B cell (primary cell): ENCODE measurements at regions of chr20 and their contacts with region 1.

Region 1: DNA sequence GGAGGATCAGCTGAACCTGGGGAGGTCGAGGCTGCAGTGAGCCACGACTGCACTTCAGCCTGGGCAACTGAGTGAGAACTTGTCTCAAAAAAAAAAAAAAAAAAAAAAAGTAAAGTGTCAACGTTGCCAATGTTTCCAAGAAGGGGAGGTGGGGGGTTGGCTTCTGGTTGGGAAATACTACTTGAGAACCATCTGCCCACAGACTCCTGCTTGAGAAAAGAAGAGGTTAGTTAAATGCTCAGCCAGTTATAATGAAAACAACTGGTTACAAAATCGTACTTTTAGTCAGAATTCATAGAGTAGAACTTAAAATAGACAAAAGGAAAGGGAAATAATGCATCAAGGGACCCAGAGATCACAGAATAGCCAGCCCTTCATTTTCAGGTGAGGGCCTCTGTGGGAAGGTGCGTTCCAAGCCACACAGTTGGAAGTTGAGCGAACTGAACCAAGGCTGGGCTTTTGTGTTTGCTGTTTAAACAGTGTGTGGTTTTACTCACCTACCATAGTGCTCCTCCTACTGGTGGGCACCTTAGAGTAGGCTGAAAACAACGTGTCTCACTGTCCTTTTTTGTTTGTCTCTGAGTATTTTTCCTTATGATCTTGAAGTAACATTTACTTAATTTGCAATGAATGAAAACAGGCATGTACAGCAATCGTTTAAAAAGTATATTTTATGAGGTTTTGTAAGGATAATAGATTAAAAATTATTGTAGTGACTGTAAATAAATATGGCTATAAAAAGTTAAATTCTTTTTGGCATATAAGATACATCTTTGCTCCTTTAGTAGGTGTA is 200.7 kb downstream of the BCAS1 start:
- DNase-seq: peak; percentile 82
- ATAC-seq: peak; percentile 76
- H3K4me3 ChIP-seq: peak overlapping the region in 2 of 5 experiments; percentile 35 to 54
- H3K4me3 Mint-ChIP-seq: peak overlapping the region; percentile 40
- H3K27ac ChIP-seq: peak overlapping the region; percentile 65 to 79
- H3K27ac Mint-ChIP-seq: peak overlapping the region; percentile 72
- H3K4me1 ChIP-seq: peaks cover 69% of the 10 kb centered on the region in 2 donors
- H3K4me1 Mint-ChIP-seq: peaks cover 64% of the 10 kb centered on the region
- H3K27me3 ChIP-seq: no peaks in the 10 kb centered on the region
- H3K27me3 Mint-ChIP-seq: no peaks in the 10 kb centered on the region
- CTCF ChIP-seq: peak; percentile 89

Region 2: DNA sequence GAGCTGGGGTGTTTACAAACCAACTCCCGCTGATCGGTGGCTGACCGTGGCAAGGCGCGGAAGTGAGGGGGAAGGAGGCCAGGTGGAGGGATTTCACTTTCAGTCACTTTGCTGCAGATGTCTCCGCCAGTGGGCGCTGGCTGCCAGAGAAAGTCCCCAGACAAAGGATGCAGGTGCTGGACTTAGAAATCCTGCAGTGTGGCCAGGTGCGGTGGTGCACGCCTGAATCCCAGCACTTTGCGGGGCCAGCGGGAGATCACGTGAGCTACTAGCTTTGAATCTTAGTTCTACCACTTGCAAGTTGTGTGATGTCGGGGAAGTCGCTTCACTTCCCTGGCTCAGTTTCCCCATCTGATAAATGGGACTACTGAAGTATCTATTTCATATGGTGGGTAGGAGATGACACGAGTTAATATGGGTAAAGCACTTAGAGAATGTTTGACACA is 456.5 kb before region 1 on chr20:
- CTCF ChIA-PET with region 1: no interaction called
- POLR2A ChIA-PET with region 1: no interaction called
- intact Hi-C with region 1: loop called (anchors 2 kb)
- DNase-seq: peak; percentile 72
- ATAC-seq: peak; percentile 56
- H3K4me3 ChIP-seq: peak overlapping the region in 1 of 5 experiments; percentile 10
- H3K4me3 Mint-ChIP-seq: peak overlapping the region; percentile 56
- H3K27ac ChIP-seq: no peak overlapping the region
- H3K27ac Mint-ChIP-seq: peak overlapping the region; percentile 0
- H3K4me1 ChIP-seq: peaks cover 0 to 8% of the 10 kb centered on the region in 2 donors
- H3K4me1 Mint-ChIP-seq: peaks cover 5% of the 10 kb centered on the region
- H3K27me3 ChIP-seq: peaks cover 0 to 4% (median 0%) of the 10 kb centered on the region in 4 experiments
- H3K27me3 Mint-ChIP-seq: no peaks in the 10 kb centered on the region
- CTCF ChIP-seq: peak; percentile 62

Region 3: DNA sequence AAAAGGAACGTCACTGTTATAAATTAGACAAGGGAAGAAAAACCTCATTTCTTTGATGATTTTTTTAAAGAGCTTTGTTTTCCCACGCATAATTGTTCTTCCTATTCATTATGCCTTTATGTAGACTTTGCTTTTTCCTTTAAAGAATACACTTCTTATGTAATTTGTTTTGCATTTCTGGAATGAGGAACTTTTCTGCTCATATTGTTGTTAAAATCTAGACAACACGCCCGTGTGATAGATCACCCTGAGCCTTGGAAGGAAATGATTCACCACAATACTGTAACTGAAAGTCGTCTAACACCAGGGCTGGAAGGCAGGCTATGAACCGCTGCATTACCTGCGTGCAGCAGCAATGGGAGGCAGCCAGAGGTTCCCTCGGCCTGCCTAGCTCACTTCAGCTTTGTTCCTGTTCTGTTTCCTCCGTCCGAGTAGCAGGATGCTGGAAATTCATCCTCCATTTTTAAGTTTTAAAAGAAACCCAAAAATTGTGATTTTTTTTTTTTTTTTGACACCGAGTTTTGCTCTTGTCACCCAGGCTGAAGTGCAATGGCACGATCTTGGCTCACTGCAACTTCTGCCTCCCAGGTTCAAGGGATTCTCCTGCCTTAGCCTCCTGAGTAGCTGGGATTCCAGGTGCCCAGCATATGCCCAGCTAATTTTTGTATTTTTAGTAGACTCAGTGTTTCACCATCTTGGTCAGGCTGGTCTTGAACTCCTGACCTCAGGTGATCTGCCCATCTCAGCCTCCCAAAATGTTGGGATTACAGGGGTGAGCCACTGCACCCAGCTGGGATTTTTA is 226.4 kb before region 1 on chr20:
- CTCF ChIA-PET with region 1: interaction called, 4 read pairs
- POLR2A ChIA-PET with region 1: no interaction called
- intact Hi-C with region 1: loop called (anchors 5 kb)
- DNase-seq: peak; percentile 74
- ATAC-seq: peak; percentile 90
- H3K4me3 ChIP-seq: peak overlapping the region in 4 of 5 experiments; percentile 0 to 43 (median 24)
- H3K4me3 Mint-ChIP-seq: peak overlapping the region; percentile 82
- H3K27ac ChIP-seq: peak overlapping the region; percentile 64 to 85
- H3K27ac Mint-ChIP-seq: peak overlapping the region; percentile 95
- H3K4me1 ChIP-seq: peaks cover 23 to 26% of the 10 kb centered on the region in 2 donors
- H3K4me1 Mint-ChIP-seq: peaks cover 31% of the 10 kb centered on the region
- H3K27me3 ChIP-seq: no peaks in the 10 kb centered on the region
- H3K27me3 Mint-ChIP-seq: no peaks in the 10 kb centered on the region
- CTCF ChIP-seq: no peak

Region 4: DNA sequence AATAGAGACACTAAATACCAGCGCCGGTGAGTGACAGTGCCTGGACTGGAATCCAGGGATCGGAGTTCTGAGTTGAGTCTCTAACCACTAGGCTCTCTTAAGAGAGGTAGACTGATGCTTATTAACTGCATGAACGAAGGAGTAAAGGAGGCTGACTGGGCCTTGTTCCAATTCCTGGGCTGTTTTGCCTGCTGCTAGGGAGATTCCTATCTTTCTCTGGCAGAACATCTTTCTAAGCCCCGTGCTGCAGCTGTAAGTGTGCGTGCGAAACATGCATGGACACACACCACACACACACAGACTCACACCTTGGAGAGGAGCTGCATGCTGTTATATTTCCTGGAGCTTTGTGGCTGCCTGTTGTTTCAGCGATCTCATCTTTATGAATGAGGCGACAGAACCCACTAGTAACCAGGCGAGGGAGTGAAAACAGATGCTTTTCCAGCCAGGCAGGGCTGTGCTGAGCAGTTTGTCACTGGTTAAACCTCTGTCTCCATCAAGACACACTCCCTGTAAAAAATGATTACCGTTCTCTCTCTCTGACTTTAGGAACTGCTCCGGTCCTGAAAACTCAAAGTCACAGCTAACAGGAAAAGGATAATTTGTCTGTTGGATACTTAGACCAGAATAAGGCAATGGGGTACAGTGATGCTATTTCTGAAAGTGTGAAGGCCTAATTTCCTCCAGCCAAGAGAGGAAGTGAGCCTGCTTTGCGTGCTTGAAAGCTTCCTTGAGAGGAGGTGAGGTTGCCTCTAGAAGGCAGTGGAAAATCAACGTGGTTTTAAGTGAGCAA is 118.6 kb before region 1 on chr20:
- CTCF ChIA-PET with region 1: interaction called, 8 read pairs
- POLR2A ChIA-PET with region 1: interaction called, 4 read pairs
- intact Hi-C with region 1: loop called (anchors 5 kb)
- DNase-seq: peak; percentile 78
- ATAC-seq: peak; percentile 87
- H3K4me3 ChIP-seq: peak overlapping the region in 1 of 5 experiments; percentile 18
- H3K4me3 Mint-ChIP-seq: peak overlapping the region; percentile 69
- H3K27ac ChIP-seq: peak overlapping the region; percentile 75 to 87
- H3K27ac Mint-ChIP-seq: peak overlapping the region; percentile 95
- H3K4me1 ChIP-seq: peaks cover 64 to 71% of the 10 kb centered on the region in 2 donors
- H3K4me1 Mint-ChIP-seq: peaks cover 60% of the 10 kb centered on the region
- H3K27me3 ChIP-seq: no peaks in the 10 kb centered on the region
- H3K27me3 Mint-ChIP-seq: no peaks in the 10 kb centered on the region
- CTCF ChIP-seq: no peak

Region 5: DNA sequence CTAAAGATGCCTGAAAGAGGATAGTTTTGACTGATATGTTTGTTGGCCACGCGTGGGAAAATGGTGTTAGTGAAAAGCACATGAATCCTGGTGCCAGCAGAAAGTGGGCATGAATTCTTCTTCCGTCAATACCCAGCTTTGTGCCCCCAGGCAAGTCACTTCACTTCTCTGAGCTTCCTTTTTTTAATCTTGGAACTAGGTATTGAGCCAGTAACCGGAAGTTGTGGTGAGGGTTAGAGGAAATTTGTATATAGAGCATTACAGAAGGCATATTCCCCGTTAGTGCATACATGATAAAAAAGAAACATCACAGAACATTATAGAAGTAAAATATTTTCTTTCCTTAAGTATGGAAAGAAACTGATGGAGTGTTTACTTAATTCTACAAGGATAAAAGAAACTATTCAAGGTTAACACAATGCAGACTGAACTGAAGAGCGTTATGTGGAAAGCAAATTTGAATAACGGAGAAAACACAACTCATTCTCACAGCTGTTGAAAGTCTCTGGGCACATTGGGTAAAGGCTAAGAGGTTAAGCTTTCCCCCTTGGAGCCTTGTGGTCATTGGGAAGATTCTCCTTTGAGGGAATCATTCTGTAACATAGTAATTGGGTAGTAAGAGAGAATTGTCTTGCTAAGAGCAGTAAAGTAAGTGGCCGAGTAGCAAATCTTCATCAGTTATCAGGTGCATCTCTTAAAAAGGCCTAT is 22.4 kb before region 1 on chr20:
- CTCF ChIA-PET with region 1: interaction called, 6 read pairs
- POLR2A ChIA-PET with region 1: interaction called, 4 read pairs
- intact Hi-C with region 1: loop called (anchors 2 kb)
- DNase-seq: peak; percentile 67
- ATAC-seq: peak; percentile 77
- H3K4me3 ChIP-seq: peak overlapping the region; percentile 7 to 50 (median 28)
- H3K4me3 Mint-ChIP-seq: peak overlapping the region; percentile 68
- H3K27ac ChIP-seq: peak overlapping the region; percentile 30 to 73
- H3K27ac Mint-ChIP-seq: peak overlapping the region; percentile 51
- H3K4me1 ChIP-seq: peaks cover 42 to 49% of the 10 kb centered on the region in 2 donors
- H3K4me1 Mint-ChIP-seq: peaks cover 61% of the 10 kb centered on the region
- H3K27me3 ChIP-seq: no peaks in the 10 kb centered on the region
- H3K27me3 Mint-ChIP-seq: no peaks in the 10 kb centered on the region
- CTCF ChIP-seq: no peak